ENCODE measurements at regions of chr19 and their contacts with region 1.

Region 1: GRCh38 chr19:18007044-18007916 is 690 bp upstream of the ARRDC2 start:
- DNase-seq: peak; percentile 96
- H3K4me3 ChIP-seq: peak overlapping the region; percentile 58 to 70 (median 65)
- H3K27ac ChIP-seq: peak overlapping the region; percentile 86 to 92 (median 89)
- H3K4me1 ChIP-seq: peaks cover 29 to 68% (median 54%) of the 10 kb centered on the region in 4 donors
- H3K27me3 ChIP-seq: no peaks in the 10 kb centered on the region
- CTCF ChIP-seq: peak; percentile 98 to 99 (median 99)
- EP300 ChIP-seq: no peak
- POLR2A ChIP-seq: peak; percentile 30

Region 2: GRCh38 chr19:18058208-18059030 is 51.1 kb after region 1 on chr19:
- intact Hi-C with region 1: loop called (anchors 1 kb)
- DNase-seq: peak; percentile 94
- H3K4me3 ChIP-seq: peak overlapping the region; percentile 26 to 37 (median 31)
- H3K27ac ChIP-seq: peak overlapping the region; percentile 81 to 86 (median 83)
- H3K4me1 ChIP-seq: peaks cover 14 to 26% (median 20%) of the 10 kb centered on the region in 4 donors
- H3K27me3 ChIP-seq: peaks cover 0 to 6% (median 0%) of the 10 kb centered on the region in 4 donors
- CTCF ChIP-seq: peak; percentile 94 to 97 (median 97)
- EP300 ChIP-seq: no peak
- POLR2A ChIP-seq: no peak

Region 3: DNA sequence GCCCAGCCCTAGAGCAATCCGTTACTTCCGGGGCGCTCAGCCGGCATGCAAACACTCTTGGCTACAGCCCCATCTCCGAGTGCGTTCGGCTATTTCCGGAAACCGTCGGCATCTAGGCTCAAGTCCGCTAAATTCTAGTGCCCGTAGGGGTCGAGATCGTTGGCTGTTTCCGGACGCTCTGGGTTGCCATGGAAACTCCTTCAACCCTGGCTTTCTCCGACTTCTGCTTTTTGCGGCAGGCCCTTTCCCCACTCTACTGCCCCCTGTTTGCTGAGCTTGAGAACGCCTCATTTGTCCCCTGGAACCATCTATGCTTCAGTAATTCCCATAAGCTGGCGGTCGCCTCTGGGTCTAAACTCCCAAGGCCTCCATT is 145.2 kb after region 1 on chr19:
- intact Hi-C with region 1: loop called (anchors 10 kb)
- DNase-seq: peak; percentile 99
- H3K4me3 ChIP-seq: peak overlapping the region; percentile 79 to 97 (median 86)
- H3K27ac ChIP-seq: peak overlapping the region; percentile 89 to 97 (median 94)
- H3K4me1 ChIP-seq: peaks cover 35 to 53% (median 50%) of the 10 kb centered on the region in 4 donors
- H3K27me3 ChIP-seq: no peaks in the 10 kb centered on the region
- CTCF ChIP-seq: peak; percentile 43 to 66 (median 59)
- EP300 ChIP-seq: no peak
- POLR2A ChIP-seq: no peak